Activated T-helper 1 cell treated with anti-CD3 and anti-CD28 coated beads, Interleukin-12 subunit alpha, Interleukin-12 subunit beta, Interleukin-2, Interleukin-4 antibody, amounts not matched to agents 30 ng/mL and 10 ng/mL and 1 ng/mL, durations not matched to agents 14 hours and 24 hours and 36 hours (primary cell): ENCODE measurements at regions of chr3 and their contacts with region 1.

Region 1: DNA sequence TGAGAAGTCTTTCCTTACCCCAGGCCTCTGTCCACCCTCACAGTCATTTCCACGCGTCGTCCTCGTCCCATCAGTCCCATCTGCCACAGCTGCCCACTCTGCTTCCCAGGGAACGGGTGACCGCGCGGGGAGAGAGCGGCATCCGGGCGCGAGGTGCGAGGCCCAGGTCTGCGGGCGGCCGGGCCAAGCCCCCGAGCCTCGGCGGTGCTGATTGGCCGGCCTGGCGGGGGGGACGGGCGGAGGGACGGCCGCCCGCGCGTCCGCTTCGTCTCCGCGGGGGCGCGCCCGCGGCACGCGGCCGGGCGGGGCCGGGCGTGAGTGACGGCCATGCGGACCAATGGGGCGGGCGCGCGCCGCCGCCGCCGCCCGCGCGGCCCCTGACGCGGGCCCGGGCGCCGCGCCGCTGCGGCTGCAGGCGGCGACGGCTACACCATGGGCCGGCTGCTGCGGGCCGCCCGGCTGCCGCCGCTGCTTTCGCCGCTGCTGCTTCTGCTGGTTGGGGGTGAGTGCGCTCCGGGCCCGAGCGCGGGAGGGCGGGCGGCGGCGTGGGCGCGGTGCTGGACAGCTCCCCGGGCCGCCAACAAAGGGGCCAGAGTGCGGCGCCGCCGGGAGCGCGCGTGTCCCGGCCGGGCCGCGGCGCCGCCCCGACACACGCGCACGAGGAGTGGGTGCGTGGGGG is at the start of gene PODXL2:
- DNase-seq: peak; percentile 12
- H3K4me3 Mint-ChIP-seq: peak within 1 kb of the TSS; percentile 83
- H3K27ac Mint-ChIP-seq: peak within 1 kb of the TSS; percentile 62
- H3K4me1 Mint-ChIP-seq: peaks cover 16% of the 10 kb centered on the region
- H3K27me3 Mint-ChIP-seq: peaks cover 55% of the 10 kb centered on the region
- total RNA-seq, gene PODXL2: 9.7 and 10.3 TPM in 2 replicates

Region 2: GRCh38 chr3:127598841-127599570 is 29.9 kb before region 1 on chr3:
- intact Hi-C with region 1: loop called (anchors 2 kb)
- DNase-seq: no peak
- H3K4me3 Mint-ChIP-seq: peak overlapping the region; percentile 100
- H3K27ac Mint-ChIP-seq: peak overlapping the region; percentile 99
- H3K4me1 Mint-ChIP-seq: peaks cover 45% of the 10 kb centered on the region
- H3K27me3 Mint-ChIP-seq: no peaks in the 10 kb centered on the region